Activated CD8-positive, alpha-beta T cell treated with anti-CD3 and anti-CD28 coated beads for 36 hours (primary cell): ENCODE measurements at regions of chr2 and their contacts with region 1.

Region 1: GRCh38 chr2:136052369-136053362 is 65.3 kb downstream of the CXCR4 start:
- DNase-seq: peak; percentile 39
- ATAC-seq: peak; percentile 23
- H3K4me3 Mint-ChIP-seq: peak overlapping the region; percentile 48
- H3K27ac Mint-ChIP-seq: peak overlapping the region; percentile 91
- H3K4me1 Mint-ChIP-seq: peaks cover 82% of the 10 kb centered on the region
- H3K27me3 Mint-ChIP-seq: no peaks in the 10 kb centered on the region
- CTCF ChIP-seq: no peak

Region 2: GRCh38 chr2:135709992-135710391 is 342.7 kb before region 1 on chr2:
- CTCF ChIA-PET with region 1: no interaction called
- POLR2A ChIA-PET with region 1: no interaction called
- intact Hi-C with region 1: no loop called
- DNase-seq: peak; percentile 83
- ATAC-seq: peak; percentile 89
- H3K4me3 Mint-ChIP-seq: no peak overlapping the region
- H3K27ac Mint-ChIP-seq: no peak overlapping the region
- H3K4me1 Mint-ChIP-seq: peaks cover 2% of the 10 kb centered on the region
- H3K27me3 Mint-ChIP-seq: no peaks in the 10 kb centered on the region
- CTCF ChIP-seq: peak; percentile 97

Region 3: GRCh38 chr2:135985018-135985825 is 67.4 kb before region 1 on chr2 and contains the start of gene DARS1:
- CTCF ChIA-PET with region 1: interaction called, 4 read pairs
- POLR2A ChIA-PET with region 1: interaction called, 18 read pairs
- intact Hi-C with region 1: loop called (anchors 1 kb)
- DNase-seq: peak; percentile 93
- ATAC-seq: peak; percentile 85
- H3K4me3 Mint-ChIP-seq: peak within 1 kb of the TSS; percentile 90
- H3K27ac Mint-ChIP-seq: peak within 1 kb of the TSS; percentile 97
- H3K4me1 Mint-ChIP-seq: peaks cover 45% of the 10 kb centered on the region
- H3K27me3 Mint-ChIP-seq: no peaks in the 10 kb centered on the region
- CTCF ChIP-seq: no peak
- total RNA-seq, gene DARS1: 210 to 211 TPM

Region 4: GRCh38 chr2:136013955-136014354 is 38.7 kb before region 1 on chr2:
- CTCF ChIA-PET with region 1: interaction called, 4 read pairs
- POLR2A ChIA-PET with region 1: interaction called, 4 read pairs
- intact Hi-C with region 1: loop called (anchors 5 kb)
- DNase-seq: no peak
- ATAC-seq: no peak
- H3K4me3 Mint-ChIP-seq: no peak overlapping the region
- H3K27ac Mint-ChIP-seq: no peak overlapping the region
- H3K4me1 Mint-ChIP-seq: peaks cover 10% of the 10 kb centered on the region
- H3K27me3 Mint-ChIP-seq: no peaks in the 10 kb centered on the region
- CTCF ChIP-seq: no peak

Region 5: DNA sequence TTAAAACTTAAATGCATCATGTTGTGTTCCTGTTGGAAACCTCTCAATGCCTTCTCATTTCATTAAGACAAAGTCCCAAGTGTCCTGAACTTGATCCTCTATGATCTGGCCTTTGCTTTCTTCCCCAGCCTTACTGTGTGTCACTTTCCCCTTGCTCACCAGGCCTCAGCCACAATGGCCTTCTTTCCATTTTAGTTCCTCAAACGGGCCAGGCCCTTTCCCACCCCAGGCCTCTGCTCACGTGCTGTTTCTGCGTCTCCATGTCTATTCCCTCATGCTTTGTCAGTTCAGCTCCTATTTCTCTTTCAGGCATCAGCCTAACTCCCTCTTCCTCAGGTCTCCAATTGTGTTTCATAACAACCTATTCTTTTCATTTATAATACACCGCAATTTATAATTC is 45.8 kb after region 1 on chr2:
- CTCF ChIA-PET with region 1: no interaction called
- POLR2A ChIA-PET with region 1: no interaction called
- intact Hi-C with region 1: no loop called
- DNase-seq: no peak
- ATAC-seq: no peak
- H3K4me3 Mint-ChIP-seq: no peak overlapping the region
- H3K27ac Mint-ChIP-seq: no peak overlapping the region
- H3K4me1 Mint-ChIP-seq: peaks cover 7% of the 10 kb centered on the region
- H3K27me3 Mint-ChIP-seq: no peaks in the 10 kb centered on the region
- CTCF ChIP-seq: no peak

Region 6: GRCh38 chr2:136117909-136118818 is 65.5 kb after region 1 on chr2 and contains the start of gene CXCR4:
- CTCF ChIA-PET with region 1: interaction called, 3 read pairs
- POLR2A ChIA-PET with region 1: interaction called, 18 read pairs
- intact Hi-C with region 1: loop called (anchors 2 kb)
- DNase-seq: peak; percentile 87
- ATAC-seq: peak; percentile 40
- H3K4me3 Mint-ChIP-seq: peak within 1 kb of the TSS; percentile 96
- H3K27ac Mint-ChIP-seq: peak within 1 kb of the TSS; percentile 95
- H3K4me1 Mint-ChIP-seq: peaks cover 56% of the 10 kb centered on the region
- H3K27me3 Mint-ChIP-seq: no peaks in the 10 kb centered on the region
- CTCF ChIP-seq: no peak
- total RNA-seq, gene CXCR4: 97.0 to 103 TPM

Region 7: GRCh38 chr2:136129601-136130000 is 76.9 kb after region 1 on chr2:
- CTCF ChIA-PET with region 1: interaction called, 3 read pairs
- POLR2A ChIA-PET with region 1: interaction called, 10 read pairs
- intact Hi-C with region 1: loop called (anchors 5 kb)
- DNase-seq: peak; percentile 54
- ATAC-seq: peak; percentile 17
- H3K4me3 Mint-ChIP-seq: peak overlapping the region; percentile 55
- H3K27ac Mint-ChIP-seq: peak overlapping the region; percentile 86
- H3K4me1 Mint-ChIP-seq: peaks cover 94% of the 10 kb centered on the region
- H3K27me3 Mint-ChIP-seq: peaks cover 3% of the 10 kb centered on the region
- CTCF ChIP-seq: no peak

Region 8: GRCh38 chr2:136327162-136327852 is 274.6 kb after region 1 on chr2:
- CTCF ChIA-PET with region 1: no interaction called
- POLR2A ChIA-PET with region 1: no interaction called
- intact Hi-C with region 1: loop called (anchors 5 kb)
- DNase-seq: peak; percentile 88
- ATAC-seq: peak; percentile 95
- H3K4me3 Mint-ChIP-seq: peak overlapping the region; percentile 44
- H3K27ac Mint-ChIP-seq: peak overlapping the region; percentile 83
- H3K4me1 Mint-ChIP-seq: peaks cover 58% of the 10 kb centered on the region
- H3K27me3 Mint-ChIP-seq: no peaks in the 10 kb centered on the region
- CTCF ChIP-seq: no peak

Region 9: DNA sequence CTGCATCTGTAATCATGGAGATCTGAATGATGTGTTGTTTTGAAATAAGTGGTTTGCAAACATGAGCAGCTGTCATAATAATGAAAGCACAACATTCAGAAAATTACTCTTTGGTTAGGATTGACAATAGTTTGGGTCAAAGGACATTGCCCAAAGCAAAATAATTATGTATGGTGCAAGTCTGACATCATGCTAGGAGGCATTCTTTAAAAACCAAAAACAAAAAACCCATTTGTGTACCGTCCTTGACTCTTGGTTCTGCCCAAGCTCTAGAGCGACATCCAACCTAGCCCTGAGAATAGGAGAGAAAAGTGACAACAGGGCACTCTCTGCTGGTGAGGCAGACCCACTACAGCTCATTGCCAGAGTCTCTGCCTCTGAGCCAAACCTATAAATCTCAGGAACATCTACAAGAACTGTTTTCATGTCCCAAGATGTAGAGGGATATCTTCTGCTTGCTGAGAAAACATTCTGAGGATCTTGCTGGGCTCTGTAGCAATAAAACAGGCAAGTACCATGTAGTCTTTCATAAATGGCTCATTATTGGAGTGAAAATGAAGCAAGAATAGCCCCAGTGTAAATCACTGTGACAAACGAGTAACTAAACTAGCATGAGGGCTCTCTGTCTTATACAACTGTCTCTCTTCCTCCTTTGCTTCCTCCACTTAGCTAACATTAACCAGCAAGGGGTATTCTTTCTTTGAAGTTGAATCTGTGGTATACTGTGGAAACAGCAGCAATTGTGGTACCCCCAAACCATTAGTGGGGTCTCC is 332.1 kb after region 1 on chr2:
- CTCF ChIA-PET with region 1: interaction called, 10 read pairs
- POLR2A ChIA-PET with region 1: interaction called, 10 read pairs
- intact Hi-C with region 1: loop called (anchors 5 kb)
- DNase-seq: peak; percentile 61
- ATAC-seq: peak; percentile 50
- H3K4me3 Mint-ChIP-seq: no peak overlapping the region
- H3K27ac Mint-ChIP-seq: peak overlapping the region; percentile 35
- H3K4me1 Mint-ChIP-seq: peaks cover 43% of the 10 kb centered on the region
- H3K27me3 Mint-ChIP-seq: no peaks in the 10 kb centered on the region
- CTCF ChIP-seq: peak; percentile 89